Activated CD4-positive, alpha-beta memory T cell treated with anti-CD3 and anti-CD28 coated beads, Interleukin-2, amount 10 ng/mL, durations not matched to agents 7 days and 5 days (primary cell): ENCODE measurements at regions of chr12 and their contacts with region 1.

Region 1: DNA sequence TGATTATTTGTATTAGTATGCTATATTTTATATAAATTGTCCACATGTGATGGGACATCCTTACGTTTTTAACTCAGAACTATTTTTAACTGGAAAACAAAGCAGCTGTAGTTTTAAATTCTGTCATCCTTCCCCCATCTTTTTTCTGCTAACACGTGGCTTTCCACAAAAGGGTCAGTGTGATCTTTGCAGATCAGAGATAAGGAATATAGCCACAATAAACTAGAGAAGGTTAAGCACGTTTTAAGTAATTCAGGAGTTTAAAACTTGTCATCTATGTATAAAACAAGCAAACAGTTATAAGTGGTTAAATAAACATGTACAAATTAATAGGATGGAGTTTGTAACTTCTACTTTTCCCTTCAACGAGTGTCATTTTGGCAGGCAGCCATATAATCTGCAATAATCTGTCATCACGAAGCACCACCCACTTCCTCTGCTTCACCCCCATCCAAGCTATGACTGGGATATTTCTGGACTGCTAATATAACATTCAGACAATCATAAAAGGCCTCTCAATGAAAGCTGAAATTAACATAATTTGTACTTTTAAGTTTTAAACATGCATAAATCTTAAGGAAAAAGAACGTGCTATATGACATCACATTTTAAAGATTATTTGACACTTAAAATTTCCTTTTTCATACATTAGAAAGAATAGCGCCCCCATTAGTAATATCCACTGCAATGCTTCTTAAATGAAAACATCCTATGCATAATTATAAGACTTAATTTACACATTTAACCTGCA is 15.3 kb downstream of the TAOK3 start:
- DNase-seq: peak; percentile 52
- H3K4me3 Mint-ChIP-seq: peak overlapping the region; percentile 95
- H3K27ac Mint-ChIP-seq: peak overlapping the region; percentile 80
- H3K4me1 Mint-ChIP-seq: peaks cover 42% of the 10 kb centered on the region
- H3K27me3 Mint-ChIP-seq: no peaks in the 10 kb centered on the region

Region 2: DNA sequence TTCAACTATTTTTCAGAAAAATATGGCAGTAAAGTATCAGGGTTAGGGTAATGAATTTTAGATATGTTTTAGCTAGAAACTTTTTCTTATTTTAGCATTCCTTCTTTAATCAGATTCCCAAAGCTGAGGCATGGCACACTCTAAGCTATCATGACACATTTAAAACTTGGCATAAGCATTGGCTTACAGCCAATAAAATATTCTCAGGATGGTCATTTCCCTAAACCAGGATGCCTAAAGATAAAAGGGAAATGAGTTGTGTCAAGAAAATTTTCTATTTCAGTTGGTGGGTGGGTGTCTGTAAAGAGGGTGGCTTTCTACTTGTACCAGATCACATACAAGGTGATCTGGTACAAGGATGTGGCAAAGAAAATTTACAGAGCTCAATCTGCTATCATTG is 173.7 kb before region 1 on chr12:
- CTCF ChIA-PET with region 1: interaction called, 23 read pairs
- POLR2A ChIA-PET with region 1: no interaction called
- DNase-seq: no peak
- H3K4me3 Mint-ChIP-seq: no peak overlapping the region
- H3K27ac Mint-ChIP-seq: no peak overlapping the region
- H3K4me1 Mint-ChIP-seq: peaks cover 6% of the 10 kb centered on the region
- H3K27me3 Mint-ChIP-seq: no peaks in the 10 kb centered on the region

Region 3: DNA sequence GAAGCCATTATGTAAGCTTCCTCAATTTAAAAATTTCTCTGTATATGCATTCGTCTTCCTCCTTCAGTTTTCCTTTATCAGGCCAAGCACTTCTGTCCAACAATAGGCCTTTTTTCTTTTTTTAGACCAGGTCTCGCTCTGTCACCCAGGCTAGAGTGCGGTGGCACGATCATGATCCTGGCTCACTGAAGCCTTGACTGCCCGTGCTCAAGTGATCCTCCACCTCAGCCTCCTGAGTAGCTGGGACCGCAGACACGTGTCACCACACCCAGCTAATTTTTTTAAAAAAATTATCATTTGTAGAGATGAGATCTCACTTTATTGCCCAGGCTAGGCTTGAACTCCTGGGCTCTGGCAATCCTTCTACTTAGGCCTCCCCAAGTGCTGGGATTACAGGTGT is 10.5 kb before region 1 on chr12:
- CTCF ChIA-PET with region 1: interaction called, 6 read pairs
- POLR2A ChIA-PET with region 1: interaction called, 19 read pairs
- DNase-seq: no peak
- H3K4me3 Mint-ChIP-seq: no peak overlapping the region
- H3K27ac Mint-ChIP-seq: no peak overlapping the region
- H3K4me1 Mint-ChIP-seq: peaks cover 9% of the 10 kb centered on the region
- H3K27me3 Mint-ChIP-seq: no peaks in the 10 kb centered on the region